MCF 10A (cell line): ENCODE measurements at regions of chr15 and their contacts with region 1.

Region 1: GRCh38 chr15:38266247-38266986 is 13.8 kb downstream of the SPRED1 start:
- DNase-seq: peak; percentile 42
- H3K4me3 Mint-ChIP-seq: peak overlapping the region; percentile 67
- H3K27ac Mint-ChIP-seq: peak overlapping the region; percentile 73
- H3K4me1 Mint-ChIP-seq: no peaks in the 10 kb centered on the region
- H3K27me3 Mint-ChIP-seq: no peaks in the 10 kb centered on the region
- CTCF ChIP-seq: no peak

Region 2: DNA sequence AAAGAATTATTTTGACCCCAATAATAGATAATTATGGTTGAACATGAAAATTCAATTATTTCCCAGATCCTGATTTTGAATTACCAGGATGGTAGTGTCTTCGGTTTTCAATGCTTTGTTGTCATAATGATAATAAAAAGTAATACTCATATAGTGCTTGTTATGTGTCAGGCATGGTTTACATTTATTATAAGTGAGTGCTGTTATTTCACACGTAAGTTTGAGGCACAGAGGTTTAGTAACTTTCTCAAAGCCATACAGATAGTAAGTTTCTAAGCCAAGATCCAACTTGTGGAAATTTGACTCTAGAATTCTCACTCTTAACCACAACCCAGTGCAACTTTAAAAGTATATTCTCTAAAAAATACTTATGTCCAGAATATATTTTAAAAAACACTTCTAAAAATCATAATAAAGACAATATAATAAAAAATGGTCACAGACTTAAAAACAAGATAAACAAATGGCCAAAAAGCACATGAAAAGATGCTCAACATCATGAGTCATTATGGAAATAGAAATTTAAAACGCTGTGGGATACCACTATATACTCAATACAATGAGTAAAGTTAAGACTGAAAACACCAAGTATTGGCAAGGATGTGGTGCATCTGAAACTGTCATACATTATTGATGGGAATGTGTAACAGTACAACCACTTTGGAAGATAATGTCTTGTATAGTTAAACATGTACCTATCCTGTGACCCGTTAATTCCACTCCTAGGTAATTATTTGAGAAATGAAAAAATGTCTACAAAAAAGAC is 31.4 kb after region 1 on chr15:
- CTCF ChIA-PET with region 1: interaction called, 5 read pairs
- POLR2A ChIA-PET with region 1: interaction called, 17 read pairs
- intact Hi-C with region 1: no loop called
- DNase-seq: peak; percentile 11
- H3K4me3 Mint-ChIP-seq: no peak overlapping the region
- H3K27ac Mint-ChIP-seq: no peak overlapping the region
- H3K4me1 Mint-ChIP-seq: peaks cover 21% of the 10 kb centered on the region
- H3K27me3 Mint-ChIP-seq: no peaks in the 10 kb centered on the region
- CTCF ChIP-seq: no peak

Region 3: DNA sequence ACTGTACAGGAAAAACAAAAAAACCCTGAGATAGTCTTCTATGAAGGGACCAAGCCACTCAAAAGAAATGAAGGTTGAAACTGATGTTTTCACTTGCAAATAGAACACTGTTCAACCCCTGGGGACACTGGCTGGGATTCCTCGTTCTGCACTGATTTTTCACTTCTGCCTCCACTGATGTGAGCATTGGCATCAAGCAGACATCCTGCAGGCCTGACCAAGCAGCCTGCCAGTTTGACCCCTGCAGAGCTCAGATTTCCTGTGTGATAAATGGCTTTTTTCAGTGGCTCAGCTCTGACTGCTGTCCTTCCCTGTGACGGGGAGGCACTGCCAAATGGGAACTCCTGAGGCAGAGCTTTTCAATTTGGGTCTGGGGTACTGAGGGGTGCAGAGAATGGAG is 248.2 kb after region 1 on chr15:
- CTCF ChIA-PET with region 1: no interaction called
- POLR2A ChIA-PET with region 1: no interaction called
- intact Hi-C with region 1: no loop called
- DNase-seq: no peak
- H3K4me3 Mint-ChIP-seq: no peak overlapping the region
- H3K27ac Mint-ChIP-seq: no peak overlapping the region
- H3K4me1 Mint-ChIP-seq: no peaks in the 10 kb centered on the region
- H3K27me3 Mint-ChIP-seq: peaks cover 62% of the 10 kb centered on the region
- CTCF ChIP-seq: no peak